ENCODE measurements at regions of chr4 and their contacts with region 1.

Region 1: GRCh38 chr4:39458505-39459300 is at the starts of genes LIAS and RPL9:
- DNase-seq: peak; percentile 97
- ATAC-seq: peak; percentile 91
- H3K4me3 ChIP-seq: peak within 1 kb of the TSS; percentile 100
- H3K27ac ChIP-seq: peak within 1 kb of the TSS; percentile 76
- H3K4me1 ChIP-seq: peaks cover 16% of the 10 kb centered on the region
- H3K27me3 ChIP-seq: no peaks in the 10 kb centered on the region
- CTCF ChIP-seq: no peak
- total RNA-seq, gene LIAS: 6.6 and 8.3 TPM in 2 replicates
- total RNA-seq, gene RPL9: 1,291 and 1,298 TPM in 2 replicates

Region 2: GRCh38 chr4:38939165-38939564 is 519.5 kb before region 1 on chr4:
- CTCF ChIA-PET with region 1: no interaction called
- POLR2A ChIA-PET with region 1: no interaction called
- intact Hi-C with region 1: no loop called
- DNase-seq: no peak
- ATAC-seq: no peak
- H3K4me3 ChIP-seq: no peak overlapping the region
- H3K27ac ChIP-seq: no peak overlapping the region
- H3K4me1 ChIP-seq: no peaks in the 10 kb centered on the region
- H3K27me3 ChIP-seq: no peaks in the 10 kb centered on the region
- CTCF ChIP-seq: no peak

Region 3: GRCh38 chr4:39341075-39341725 is 117.5 kb before region 1 on chr4:
- CTCF ChIA-PET with region 1: no interaction called
- POLR2A ChIA-PET with region 1: no interaction called
- intact Hi-C with region 1: no loop called
- DNase-seq: no peak
- ATAC-seq: no peak
- H3K4me3 ChIP-seq: no peak overlapping the region
- H3K27ac ChIP-seq: no peak overlapping the region
- H3K4me1 ChIP-seq: no peaks in the 10 kb centered on the region
- H3K27me3 ChIP-seq: no peaks in the 10 kb centered on the region
- CTCF ChIP-seq: no peak

Region 4: GRCh38 chr4:39415678-39416283 is 42.9 kb before region 1 on chr4:
- CTCF ChIA-PET with region 1: no interaction called
- POLR2A ChIA-PET with region 1: no interaction called
- intact Hi-C with region 1: no loop called
- DNase-seq: no peak
- ATAC-seq: no peak
- H3K4me3 ChIP-seq: no peak overlapping the region
- H3K27ac ChIP-seq: no peak overlapping the region
- H3K4me1 ChIP-seq: no peaks in the 10 kb centered on the region
- H3K27me3 ChIP-seq: no peaks in the 10 kb centered on the region
- CTCF ChIP-seq: no peak

Region 5: GRCh38 chr4:39732728-39733127 is 274.0 kb after region 1 on chr4:
- CTCF ChIA-PET with region 1: no interaction called
- POLR2A ChIA-PET with region 1: interaction called, 13 read pairs
- intact Hi-C with region 1: no loop called
- DNase-seq: peak; percentile 56
- ATAC-seq: peak; percentile 85
- H3K4me3 ChIP-seq: no peak overlapping the region
- H3K27ac ChIP-seq: peak overlapping the region; percentile 19; the same call in 1 of the 2 replicates
- H3K4me1 ChIP-seq: peaks cover 12% of the 10 kb centered on the region
- H3K27me3 ChIP-seq: no peaks in the 10 kb centered on the region
- CTCF ChIP-seq: no peak

Measured in PC-3 (cell line).